H1 (cell line): ENCODE measurements at regions of chr5 and their contacts with region 1.

Region 1: GRCh38 chr5:57779383-57780223 is 297.0 kb upstream of the ACTBL2 start:
- DNase-seq: peak in 1 of 2 experiments; percentile 49
- H3K4me3 ChIP-seq: no peak overlapping the region
- H3K27ac ChIP-seq: no peak overlapping the region
- H3K4me1 ChIP-seq: no peaks in the 10 kb centered on the region
- H3K27me3 ChIP-seq: no peaks in the 10 kb centered on the region
- CTCF ChIP-seq: peak in 2 of 3 experiments; percentile 55 to 58; a peak in 3 of 4 replicates
- EP300 ChIP-seq: no peak
- POLR2A ChIP-seq: no peak
- RAD21 ChIP-seq: peak; percentile 90 to 94

Region 2: GRCh38 chr5:57513785-57514184 is 265.8 kb before region 1 on chr5:
- CTCF ChIA-PET with region 1: interaction called, 11 read pairs
- POLR2A ChIA-PET with region 1: no interaction called
- DNase-seq: no peak
- H3K4me3 ChIP-seq: no peak overlapping the region
- H3K27ac ChIP-seq: no peak overlapping the region
- H3K4me1 ChIP-seq: no peaks in the 10 kb centered on the region
- H3K27me3 ChIP-seq: no peaks in the 10 kb centered on the region
- CTCF ChIP-seq: no peak
- EP300 ChIP-seq: no peak
- POLR2A ChIP-seq: no peak
- RAD21 ChIP-seq: no peak

Region 3: GRCh38 chr5:57754616-57755015 is 25.0 kb before region 1 on chr5:
- CTCF ChIA-PET with region 1: no interaction called
- POLR2A ChIA-PET with region 1: no interaction called
- DNase-seq: no peak
- H3K4me3 ChIP-seq: no peak overlapping the region
- H3K27ac ChIP-seq: no peak overlapping the region
- H3K4me1 ChIP-seq: no peaks in the 10 kb centered on the region
- H3K27me3 ChIP-seq: no peaks in the 10 kb centered on the region
- CTCF ChIP-seq: no peak
- EP300 ChIP-seq: no peak
- POLR2A ChIP-seq: no peak
- RAD21 ChIP-seq: no peak

Region 4: GRCh38 chr5:57845025-57845424 is 65.4 kb after region 1 on chr5:
- CTCF ChIA-PET with region 1: no interaction called
- POLR2A ChIA-PET with region 1: no interaction called
- DNase-seq: no peak
- H3K4me3 ChIP-seq: no peak overlapping the region
- H3K27ac ChIP-seq: no peak overlapping the region
- H3K4me1 ChIP-seq: peaks cover 0 to 11% (median 4%) of the 10 kb centered on the region in 4 experiments; a peak in 3 of 7 replicates
- H3K27me3 ChIP-seq: no peaks in the 10 kb centered on the region
- CTCF ChIP-seq: no peak
- EP300 ChIP-seq: no peak
- POLR2A ChIP-seq: no peak
- RAD21 ChIP-seq: no peak

Region 5: GRCh38 chr5:57887851-57888621 is 108.4 kb after region 1 on chr5:
- CTCF ChIA-PET with region 1: interaction called, 19 read pairs
- POLR2A ChIA-PET with region 1: no interaction called
- DNase-seq: no peak
- H3K4me3 ChIP-seq: no peak overlapping the region
- H3K27ac ChIP-seq: no peak overlapping the region
- H3K4me1 ChIP-seq: peaks cover 0 to 13% (median 4%) of the 10 kb centered on the region in 4 experiments
- H3K27me3 ChIP-seq: no peaks in the 10 kb centered on the region
- CTCF ChIP-seq: peak; percentile 42 to 60 (median 59)
- EP300 ChIP-seq: no peak
- POLR2A ChIP-seq: no peak
- RAD21 ChIP-seq: peak; percentile 84 to 89